K562 (cell line): ENCODE measurements at regions of chr10 and their contacts with region 1.

Region 1: GRCh38 chr10:87656431-87657072 is 3.1 kb upstream of the PAPSS2 start:
- DNase-seq: peak; percentile 34 to 56 (median 42)
- ATAC-seq: peak; percentile 78
- H3K4me3 ChIP-seq: no peak overlapping the region
- H3K27ac ChIP-seq: no peak overlapping the region
- H3K4me1 ChIP-seq: peaks cover 0 to 4% of the 10 kb centered on the region in 2 experiments; a peak in 4 of 5 replicates
- H3K27me3 ChIP-seq: no peaks in the 10 kb centered on the region
- CTCF ChIP-seq: peak; percentile 64 to 70 (median 68)
- EP300 ChIP-seq: no peak
- POLR2A ChIP-seq: no peak
- RAD21 ChIP-seq: peak; percentile 72 to 85

Region 2: DNA sequence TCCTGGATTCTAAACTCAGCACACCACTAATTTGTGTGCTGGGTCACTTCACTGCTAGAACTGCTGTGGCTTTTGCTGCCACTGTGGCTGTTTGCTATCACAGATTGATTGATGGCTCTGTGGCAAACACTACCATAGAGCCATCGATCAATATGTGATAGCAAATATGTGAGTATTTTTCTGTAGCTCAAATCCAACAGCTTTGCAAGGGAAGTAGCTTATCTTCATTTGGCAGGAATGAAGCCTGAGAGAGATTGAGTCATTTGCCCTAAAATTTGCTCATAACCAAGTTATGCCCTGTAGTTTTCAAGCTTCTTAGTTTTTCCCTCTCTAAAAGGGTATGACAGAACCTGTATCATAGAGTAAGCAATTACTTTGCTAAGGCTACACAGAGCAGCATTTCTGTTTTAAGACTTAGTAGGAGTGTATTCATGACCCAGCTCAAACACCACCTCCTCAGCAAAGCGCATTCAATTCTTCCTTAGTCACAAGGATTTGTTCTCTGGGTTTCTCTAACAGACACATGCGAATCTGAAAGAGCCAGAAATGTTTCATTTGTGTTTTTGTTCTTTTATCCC is 108.7 kb before region 1 on chr10:
- CTCF ChIA-PET with region 1: no interaction called
- POLR2A ChIA-PET with region 1: no interaction called
- in situ Hi-C with region 1: no loop called
- intact Hi-C with region 1: loop called (anchors 5 kb)
- DNase-seq: peak in 2 of 4 experiments; percentile 10 to 29
- ATAC-seq: peak; percentile 41
- H3K4me3 ChIP-seq: no peak overlapping the region
- H3K27ac ChIP-seq: peak overlapping the region; percentile 60; the same call in 1 of the 3 replicates
- H3K4me1 ChIP-seq: peaks cover 8 to 30% of the 10 kb centered on the region in 2 experiments; a peak in 4 of 5 replicates
- H3K27me3 ChIP-seq: no peaks in the 10 kb centered on the region
- CTCF ChIP-seq: no peak
- EP300 ChIP-seq: no peak
- POLR2A ChIP-seq: no peak
- RAD21 ChIP-seq: no peak

Region 3: GRCh38 chr10:87734987-87735827 is 78.7 kb after region 1 on chr10:
- CTCF ChIA-PET with region 1: no interaction called
- POLR2A ChIA-PET with region 1: no interaction called
- in situ Hi-C with region 1: no loop called
- intact Hi-C with region 1: loop called (anchors 1 kb)
- DNase-seq: peak; percentile 29 to 43 (median 36)
- ATAC-seq: peak; percentile 88
- H3K4me3 ChIP-seq: no peak overlapping the region
- H3K27ac ChIP-seq: no peak overlapping the region
- H3K4me1 ChIP-seq: no peaks in the 10 kb centered on the region
- H3K27me3 ChIP-seq: no peaks in the 10 kb centered on the region; a peak in 1 of 5 replicates
- CTCF ChIP-seq: peak; percentile 51 to 71 (median 68)
- EP300 ChIP-seq: no peak
- POLR2A ChIP-seq: no peak
- RAD21 ChIP-seq: peak; percentile 74 to 86

Region 4: DNA sequence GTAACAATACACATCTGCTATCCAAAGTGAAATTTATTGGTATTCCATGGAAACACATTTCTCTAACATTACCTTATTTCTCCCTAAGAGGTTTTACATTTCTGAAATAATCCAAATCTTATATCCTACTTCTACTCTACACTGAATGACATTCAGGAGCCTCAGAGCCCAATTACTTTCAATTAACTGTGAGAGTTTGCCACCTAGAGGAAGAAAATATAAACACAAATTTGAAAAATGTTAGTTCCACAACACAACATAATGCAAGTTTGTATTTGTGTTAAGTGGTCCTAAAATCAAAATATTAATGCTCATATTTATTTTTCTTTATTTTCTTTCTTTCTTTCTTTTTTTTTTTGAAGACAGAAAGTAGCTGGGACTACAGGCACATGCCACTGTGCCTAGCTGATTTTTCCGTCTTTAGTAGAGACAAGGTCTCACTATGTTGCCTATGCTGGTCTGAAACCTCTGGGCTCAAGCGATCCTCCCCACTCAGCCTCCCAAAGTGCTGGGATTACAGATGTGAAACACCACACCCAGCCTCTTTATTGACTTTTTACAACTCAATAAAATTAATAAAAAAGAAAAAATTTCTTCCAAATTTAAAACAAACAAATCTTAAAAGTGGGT is 115.4 kb after region 1 on chr10:
- CTCF ChIA-PET with region 1: interaction called, 11 read pairs
- POLR2A ChIA-PET with region 1: no interaction called
- in situ Hi-C with region 1: no loop called
- intact Hi-C with region 1: no loop called
- DNase-seq: peak in 2 of 4 experiments; percentile 7 to 8
- ATAC-seq: peak; percentile 78
- H3K4me3 ChIP-seq: no peak overlapping the region
- H3K27ac ChIP-seq: no peak overlapping the region
- H3K4me1 ChIP-seq: no peaks in the 10 kb centered on the region
- H3K27me3 ChIP-seq: no peaks in the 10 kb centered on the region
- CTCF ChIP-seq: peak in 1 of 3 experiments; percentile 51; a peak in 3 of 6 replicates
- EP300 ChIP-seq: no peak
- POLR2A ChIP-seq: no peak
- RAD21 ChIP-seq: peak; percentile 48 to 58